ENCODE measurements at regions of chr7 and their contacts with region 1.

Region 1: GRCh38 chr7:22911889-22912288 is 89.2 kb upstream of the TOMM7 start:
- DNase-seq: no peak

Region 2: GRCh38 chr7:22822486-22823141 is 89.3 kb before region 1 on chr7 and contains the start of gene TOMM7:
- intact Hi-C with region 1: loop called (anchors 5 kb)
- DNase-seq: peak; percentile 94
- total RNA-seq, gene TOMM7: 318 TPM